Astrocyte of the cerebellum (primary cell): ENCODE measurements at regions of chr19 and their contacts with region 1.

Region 1: GRCh38 chr19:56261145-56261544 is 11.4 kb upstream of the EDDM13 start:
- DNase-seq: no peak
- H3K4me3 ChIP-seq: no peak overlapping the region
- CTCF ChIP-seq: no peak

Region 2: GRCh38 chr19:56174550-56174949 is 86.6 kb before region 1 on chr19:
- in situ Hi-C with region 1: no loop called
- DNase-seq: no peak
- H3K4me3 ChIP-seq: no peak overlapping the region
- CTCF ChIP-seq: no peak

Region 3: DNA sequence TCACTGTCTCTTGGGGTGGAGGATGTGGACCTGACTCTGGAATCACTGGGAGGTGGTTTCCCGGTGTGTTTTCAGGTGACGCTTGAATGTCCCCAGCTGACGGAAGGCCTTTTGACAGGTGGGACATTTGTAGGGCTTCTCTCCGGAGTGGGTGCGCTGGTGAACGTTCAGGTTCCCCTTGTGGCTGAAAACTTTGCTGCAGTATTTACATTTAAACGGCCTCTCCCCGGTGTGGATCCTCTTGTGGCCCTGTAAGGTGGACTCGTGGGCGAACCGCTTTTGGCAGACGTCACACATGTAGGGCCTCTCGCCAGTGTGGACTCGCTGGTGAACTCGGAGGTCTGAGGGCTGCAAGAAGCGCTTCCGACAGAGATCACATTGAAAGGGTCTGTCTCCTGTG is 71.4 kb before region 1 on chr19:
- in situ Hi-C with region 1: loop called (anchors 5 kb)
- DNase-seq: no peak
- H3K4me3 ChIP-seq: no peak overlapping the region
- CTCF ChIP-seq: no peak

Region 4: DNA sequence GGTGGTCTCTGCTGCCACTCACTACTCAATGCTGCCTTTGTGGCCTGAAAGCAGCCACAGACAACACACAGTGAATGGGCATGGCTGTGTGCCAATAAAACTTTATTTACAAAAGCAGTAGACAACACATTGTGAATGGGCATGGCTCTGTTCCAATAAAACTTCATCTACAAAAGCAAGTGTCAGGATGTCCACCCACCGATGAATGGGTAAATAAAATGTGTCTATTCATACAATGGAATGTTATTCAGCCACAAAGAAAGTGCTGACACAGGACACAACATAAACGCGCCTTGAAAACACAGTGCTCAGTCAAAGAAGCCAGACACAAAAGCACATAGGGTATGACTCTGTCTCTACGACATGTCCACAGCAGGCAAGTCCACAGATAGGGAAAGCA is 33.4 kb after region 1 on chr19:
- in situ Hi-C with region 1: no loop called
- DNase-seq: no peak
- H3K4me3 ChIP-seq: no peak overlapping the region
- CTCF ChIP-seq: no peak